Naive thymus-derived CD4-positive, alpha-beta T cell (primary cell): ENCODE measurements at regions of chr21 and their contacts with region 1.

Region 1: DNA sequence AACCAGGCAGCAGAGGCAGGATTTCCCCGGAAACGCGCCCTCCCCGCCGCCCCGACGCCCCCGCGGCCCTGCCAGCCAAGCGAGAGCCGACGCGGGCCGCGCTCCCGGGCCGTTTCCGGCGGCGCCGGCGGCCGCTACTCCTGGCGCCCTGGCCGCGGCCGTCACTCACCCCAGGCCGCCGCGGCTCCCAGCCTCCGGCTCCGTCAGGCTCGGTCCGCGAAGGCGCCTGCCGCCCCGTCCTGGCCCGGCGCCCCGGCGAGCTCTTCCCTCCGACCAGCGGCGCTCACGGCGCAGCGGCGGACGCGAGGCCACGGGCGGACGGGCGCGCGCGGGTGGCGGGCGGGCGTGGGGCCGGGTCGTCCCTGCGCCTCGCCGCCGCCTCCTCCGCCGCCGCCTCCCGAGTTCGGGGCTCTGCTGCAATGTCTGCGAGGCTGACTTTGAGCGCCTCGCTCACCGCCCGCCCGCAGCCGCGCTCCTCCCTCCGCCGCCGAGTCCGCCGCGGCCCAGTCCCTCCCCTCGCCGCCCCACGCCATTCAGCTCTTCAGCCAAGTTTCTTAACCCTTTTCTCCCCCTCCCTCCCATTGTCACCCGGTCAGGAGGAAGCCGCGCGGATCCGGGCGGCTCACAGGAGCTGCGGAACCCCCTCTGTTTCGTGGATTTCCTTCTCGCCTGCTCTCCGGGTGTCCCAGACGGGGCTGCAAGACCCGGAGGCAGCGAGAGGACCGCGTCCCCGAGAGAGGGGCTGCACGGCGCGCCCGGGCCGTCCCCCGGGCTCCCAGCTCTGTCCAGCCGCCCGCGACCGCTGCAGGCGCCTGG is at the start of gene NRIP1:
- DNase-seq: peak; percentile 80 to 88 (median 82)
- ATAC-seq: peak; percentile 91
- H3K4me3 ChIP-seq: peak within 1 kb of the TSS; percentile 73
- H3K4me3 Mint-ChIP-seq: peak within 1 kb of the TSS; percentile 94 to 99 (median 96)
- H3K27ac ChIP-seq: peak within 1 kb of the TSS; percentile 85
- H3K27ac Mint-ChIP-seq: peak within 1 kb of the TSS; percentile 95 to 99 (median 98)
- H3K4me1 ChIP-seq: peaks cover 0 to 20% of the 10 kb centered on the region in 2 donors
- H3K4me1 Mint-ChIP-seq: peaks cover 25 to 53% (median 45%) of the 10 kb centered on the region in 7 donors
- H3K27me3 ChIP-seq: no peaks in the 10 kb centered on the region
- H3K27me3 Mint-ChIP-seq: peaks cover 0 to 33% (median 0%) of the 10 kb centered on the region in 5 donors
- total RNA-seq, gene NRIP1: 13.8 to 42.6 (median 35.8) TPM

Region 2: GRCh38 chr21:14259747-14260146 is 805.0 kb before region 1 on chr21:
- CTCF ChIA-PET with region 1: no interaction called
- POLR2A ChIA-PET with region 1: no interaction called
- intact Hi-C with region 1: loop called in 1 of 2 experiments (anchors 5 kb)
- DNase-seq: peak in 5 of 9 donors; percentile 13 to 28 (median 23)
- ATAC-seq: peak; percentile 59
- H3K4me3 ChIP-seq: no peak overlapping the region
- H3K4me3 Mint-ChIP-seq: no peak overlapping the region
- H3K27ac ChIP-seq: no peak overlapping the region
- H3K27ac Mint-ChIP-seq: no peak overlapping the region
- H3K4me1 ChIP-seq: no peaks in the 10 kb centered on the region
- H3K4me1 Mint-ChIP-seq: no peaks in the 10 kb centered on the region
- H3K27me3 ChIP-seq: no peaks in the 10 kb centered on the region
- H3K27me3 Mint-ChIP-seq: peaks cover 2 to 19% (median 12%) of the 10 kb centered on the region in 5 donors

Region 3: GRCh38 chr21:14545906-14546480 is 518.8 kb before region 1 on chr21 and contains the start of gene SAMSN1:
- CTCF ChIA-PET with region 1: no interaction called
- POLR2A ChIA-PET with region 1: interaction called, 3 read pairs
- intact Hi-C with region 1: loop called (anchors 5 kb)
- DNase-seq: peak in 8 of 9 donors; percentile 62 to 84 (median 78)
- ATAC-seq: peak; percentile 93
- H3K4me3 ChIP-seq: peak within 1 kb of the TSS; percentile 78
- H3K4me3 Mint-ChIP-seq: peak within 1 kb of the TSS; percentile 81 to 99 (median 93)
- H3K27ac ChIP-seq: peak within 1 kb of the TSS; percentile 82
- H3K27ac Mint-ChIP-seq: peak within 1 kb of the TSS; percentile 81 to 97 (median 93)
- H3K4me1 ChIP-seq: peaks cover 43 to 50% of the 10 kb centered on the region in 2 donors
- H3K4me1 Mint-ChIP-seq: peaks cover 31 to 79% (median 67%) of the 10 kb centered on the region in 7 donors
- H3K27me3 ChIP-seq: no peaks in the 10 kb centered on the region
- H3K27me3 Mint-ChIP-seq: no peaks in the 10 kb centered on the region
- total RNA-seq, gene SAMSN1: 27.5 to 136 (median 38.0) TPM

Region 4: GRCh38 chr21:14762734-14763694 is 301.8 kb before region 1 on chr21:
- CTCF ChIA-PET with region 1: no interaction called
- POLR2A ChIA-PET with region 1: interaction called, 4 read pairs
- intact Hi-C with region 1: loop called in 1 of 2 experiments (anchors 10 kb)
- DNase-seq: peak in 3 of 9 donors; percentile 11 to 20 (median 15)
- ATAC-seq: peak; percentile 84
- H3K4me3 ChIP-seq: peak overlapping the region; percentile 21
- H3K4me3 Mint-ChIP-seq: no peak overlapping the region
- H3K27ac ChIP-seq: peak overlapping the region; percentile 26
- H3K27ac Mint-ChIP-seq: no peak overlapping the region
- H3K4me1 ChIP-seq: peaks cover 0 to 10% of the 10 kb centered on the region in 2 donors
- H3K4me1 Mint-ChIP-seq: peaks cover 0 to 8% (median 6%) of the 10 kb centered on the region in 7 donors
- H3K27me3 ChIP-seq: no peaks in the 10 kb centered on the region
- H3K27me3 Mint-ChIP-seq: no peaks in the 10 kb centered on the region

Region 5: DNA sequence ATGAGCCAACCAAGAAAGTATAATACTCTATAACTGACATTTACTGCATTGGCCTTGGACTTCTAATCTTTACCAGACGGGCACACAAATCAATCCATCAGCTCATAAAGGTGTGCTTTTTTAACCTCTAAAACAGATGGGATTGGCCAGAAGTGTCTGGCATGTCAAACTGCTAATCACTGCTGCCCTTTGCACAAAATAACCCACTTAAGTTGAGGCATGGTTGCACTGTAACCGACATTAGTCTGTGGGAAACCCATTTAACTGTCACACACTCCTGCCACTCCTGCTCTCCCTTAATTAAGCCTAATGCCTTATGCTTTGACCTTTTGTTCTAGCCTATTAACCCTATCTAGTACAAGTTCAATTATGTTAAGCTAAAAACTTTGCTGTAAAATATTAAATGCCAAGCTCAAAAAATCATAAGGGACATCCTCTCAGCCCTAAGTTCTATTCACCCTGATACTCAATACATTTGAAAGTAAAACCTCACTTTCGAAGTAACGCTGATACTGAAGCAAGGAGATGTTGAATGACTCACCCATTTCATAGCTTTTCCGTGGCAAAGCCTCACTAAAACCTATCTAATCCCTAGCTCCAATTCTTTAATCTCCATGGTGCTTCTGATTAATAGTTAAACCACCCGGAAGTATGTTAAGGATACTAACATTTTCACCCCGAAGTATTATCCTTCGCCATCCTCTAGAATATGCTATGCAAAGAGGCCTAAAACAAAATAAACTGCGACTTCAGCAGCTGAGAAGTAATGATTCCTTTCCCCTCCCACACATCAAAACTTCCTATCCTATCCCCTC is 12.9 kb before region 1 on chr21:
- CTCF ChIA-PET with region 1: no interaction called
- POLR2A ChIA-PET with region 1: interaction called, 10 read pairs
- intact Hi-C with region 1: loop called (anchors 1 to 2 kb)
- DNase-seq: no peak
- ATAC-seq: peak; percentile 54
- H3K4me3 ChIP-seq: no peak overlapping the region
- H3K4me3 Mint-ChIP-seq: peak overlapping the region; percentile 54 to 89 (median 75)
- H3K27ac ChIP-seq: no peak overlapping the region
- H3K27ac Mint-ChIP-seq: peak overlapping the region in 8 of 9 donors; percentile 12 to 78 (median 38)
- H3K4me1 ChIP-seq: peaks cover 0 to 57% of the 10 kb centered on the region in 2 donors
- H3K4me1 Mint-ChIP-seq: peaks cover 59 to 93% (median 82%) of the 10 kb centered on the region in 7 donors
- H3K27me3 ChIP-seq: no peaks in the 10 kb centered on the region
- H3K27me3 Mint-ChIP-seq: no peaks in the 10 kb centered on the region

Region 6: DNA sequence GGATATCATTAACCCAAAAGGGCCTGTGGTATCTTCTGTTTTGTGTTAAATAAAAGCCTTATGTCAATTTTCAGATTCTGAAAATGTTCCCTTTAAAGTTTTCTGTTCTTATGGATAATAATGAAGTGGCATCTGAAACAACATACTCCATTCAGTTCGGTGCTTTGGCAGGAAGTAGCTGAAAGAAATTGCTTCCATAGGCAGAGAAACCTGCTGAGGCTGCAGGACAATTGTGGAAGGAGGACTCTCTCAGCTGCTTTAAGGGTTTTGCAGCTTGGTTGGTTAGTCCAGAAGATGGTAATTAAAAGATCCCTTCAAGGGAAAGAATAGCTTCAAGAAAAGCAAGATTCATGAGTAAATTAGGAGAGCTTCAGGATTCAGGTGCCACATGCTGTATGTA is 30.5 kb after region 1 on chr21:
- CTCF ChIA-PET with region 1: no interaction called
- POLR2A ChIA-PET with region 1: no interaction called
- intact Hi-C with region 1: no loop called
- DNase-seq: no peak
- ATAC-seq: no peak
- H3K4me3 ChIP-seq: no peak overlapping the region
- H3K4me3 Mint-ChIP-seq: no peak overlapping the region
- H3K27ac ChIP-seq: no peak overlapping the region
- H3K27ac Mint-ChIP-seq: no peak overlapping the region
- H3K4me1 ChIP-seq: no peaks in the 10 kb centered on the region
- H3K4me1 Mint-ChIP-seq: no peaks in the 10 kb centered on the region
- H3K27me3 ChIP-seq: no peaks in the 10 kb centered on the region
- H3K27me3 Mint-ChIP-seq: peaks cover 0 to 4% (median 0%) of the 10 kb centered on the region in 5 donors

Region 7: DNA sequence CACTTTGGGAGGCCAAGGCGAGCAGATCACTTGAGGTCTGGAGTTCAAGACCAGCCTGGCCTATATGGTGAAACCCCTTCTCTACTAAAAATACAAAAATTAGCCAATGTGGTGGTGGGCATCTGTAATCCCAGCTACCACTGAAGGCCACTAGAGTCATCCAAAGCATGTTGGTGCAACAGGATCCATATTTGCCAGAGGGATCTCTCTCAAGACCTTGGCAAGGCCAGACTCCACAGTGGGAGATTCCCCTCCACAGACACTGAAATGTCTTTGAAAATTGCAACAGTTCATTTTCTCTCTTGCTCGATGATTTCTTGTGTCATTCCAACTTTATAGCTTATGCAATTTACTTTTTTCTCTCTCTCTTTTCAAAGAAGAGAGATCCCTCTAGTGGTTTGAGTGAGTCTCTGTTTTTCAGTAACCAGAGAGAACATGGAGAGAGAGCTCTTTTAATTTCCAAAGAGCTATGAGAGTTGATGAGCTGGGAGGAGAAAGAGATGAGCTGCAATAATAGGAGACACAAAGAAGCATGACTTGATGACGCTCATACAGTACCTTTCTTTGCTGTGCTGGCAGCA is 488.2 kb after region 1 on chr21:
- CTCF ChIA-PET with region 1: interaction called, 6 read pairs
- POLR2A ChIA-PET with region 1: interaction called, 5 read pairs
- intact Hi-C with region 1: loop called in 1 of 2 experiments (anchors 1 kb)
- DNase-seq: peak in 6 of 9 donors; percentile 13 to 62 (median 48)
- ATAC-seq: peak; percentile 64
- H3K4me3 ChIP-seq: no peak overlapping the region
- H3K4me3 Mint-ChIP-seq: peak overlapping the region in 5 of 10 donors; percentile 25 to 56 (median 33)
- H3K27ac ChIP-seq: no peak overlapping the region
- H3K27ac Mint-ChIP-seq: peak overlapping the region in 5 of 9 donors; percentile 4 to 70 (median 16)
- H3K4me1 ChIP-seq: peaks cover 0 to 9% of the 10 kb centered on the region in 2 donors
- H3K4me1 Mint-ChIP-seq: peaks cover 4 to 23% (median 18%) of the 10 kb centered on the region in 7 donors
- H3K27me3 ChIP-seq: no peaks in the 10 kb centered on the region
- H3K27me3 Mint-ChIP-seq: peaks cover 0 to 4% (median 0%) of the 10 kb centered on the region in 5 donors

Region 8: DNA sequence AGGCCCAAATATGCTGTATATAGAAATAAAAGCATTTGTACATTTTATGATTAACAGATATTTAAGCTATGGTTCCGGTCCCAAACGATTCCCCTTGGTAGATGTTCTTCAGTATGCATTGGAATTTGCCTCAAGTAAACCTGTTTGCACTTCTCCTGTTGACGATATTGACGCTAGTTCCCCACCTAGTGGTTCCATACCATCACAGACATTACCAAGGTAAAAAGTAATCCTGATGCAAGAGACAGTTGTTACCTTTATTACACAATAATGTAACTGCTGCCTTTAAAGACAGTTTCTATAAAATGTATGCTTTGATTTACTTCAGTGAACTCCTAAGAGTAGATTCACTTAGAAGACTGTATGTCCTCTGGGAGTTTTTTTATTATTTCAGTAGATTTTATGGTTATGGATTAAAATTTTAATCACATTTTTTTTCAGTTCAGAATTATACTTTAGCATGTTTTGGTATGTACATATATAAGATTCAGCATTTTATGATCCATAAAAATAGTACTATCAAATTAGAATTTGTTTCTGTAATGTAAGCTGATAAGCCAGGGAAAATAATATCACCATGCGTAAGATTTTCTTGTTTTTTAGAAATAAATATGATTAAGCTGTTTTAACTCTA is 761.5 kb after region 1 on chr21:
- CTCF ChIA-PET with region 1: no interaction called
- POLR2A ChIA-PET with region 1: interaction called, 3 read pairs
- intact Hi-C with region 1: loop called in 1 of 2 experiments (anchors 2 kb)
- DNase-seq: peak in 7 of 9 donors; percentile 6 to 51 (median 31)
- ATAC-seq: peak; percentile 68
- H3K4me3 ChIP-seq: no peak overlapping the region
- H3K4me3 Mint-ChIP-seq: peak overlapping the region in 2 of 10 donors; percentile 1 to 6
- H3K27ac ChIP-seq: no peak overlapping the region
- H3K27ac Mint-ChIP-seq: peak overlapping the region in 4 of 9 donors; percentile 1 to 56 (median 36)
- H3K4me1 ChIP-seq: peaks cover 18 to 21% of the 10 kb centered on the region in 2 donors
- H3K4me1 Mint-ChIP-seq: peaks cover 18 to 54% (median 47%) of the 10 kb centered on the region in 7 donors
- H3K27me3 ChIP-seq: no peaks in the 10 kb centered on the region
- H3K27me3 Mint-ChIP-seq: no peaks in the 10 kb centered on the region

Region 9: GRCh38 chr21:16082038-16082816 is 1017.4 kb after region 1 on chr21:
- CTCF ChIA-PET with region 1: no interaction called
- POLR2A ChIA-PET with region 1: no interaction called
- intact Hi-C with region 1: no loop called
- DNase-seq: no peak
- ATAC-seq: no peak
- H3K4me3 ChIP-seq: no peak overlapping the region
- H3K4me3 Mint-ChIP-seq: no peak overlapping the region
- H3K27ac ChIP-seq: no peak overlapping the region
- H3K27ac Mint-ChIP-seq: no peak overlapping the region
- H3K4me1 ChIP-seq: no peaks in the 10 kb centered on the region
- H3K4me1 Mint-ChIP-seq: no peaks in the 10 kb centered on the region
- H3K27me3 ChIP-seq: no peaks in the 10 kb centered on the region
- H3K27me3 Mint-ChIP-seq: no peaks in the 10 kb centered on the region